Activated CD4-positive, alpha-beta memory T cell treated with anti-CD3 and anti-CD28 coated beads for 36 hours (primary cell): ENCODE measurements at regions of chr2 and their contacts with region 1.

Region 1: GRCh38 chr2:219498280-219499057 is at the start of gene GMPPA:
- DNase-seq: peak; percentile 97
- H3K4me3 Mint-ChIP-seq: peak within 1 kb of the TSS; percentile 83
- H3K27ac Mint-ChIP-seq: peak within 1 kb of the TSS; percentile 72
- H3K4me1 Mint-ChIP-seq: peaks cover 38% of the 10 kb centered on the region
- H3K27me3 Mint-ChIP-seq: peaks cover 41% of the 10 kb centered on the region
- total RNA-seq, gene GMPPA: 37.1 to 37.4 TPM

Region 2: DNA sequence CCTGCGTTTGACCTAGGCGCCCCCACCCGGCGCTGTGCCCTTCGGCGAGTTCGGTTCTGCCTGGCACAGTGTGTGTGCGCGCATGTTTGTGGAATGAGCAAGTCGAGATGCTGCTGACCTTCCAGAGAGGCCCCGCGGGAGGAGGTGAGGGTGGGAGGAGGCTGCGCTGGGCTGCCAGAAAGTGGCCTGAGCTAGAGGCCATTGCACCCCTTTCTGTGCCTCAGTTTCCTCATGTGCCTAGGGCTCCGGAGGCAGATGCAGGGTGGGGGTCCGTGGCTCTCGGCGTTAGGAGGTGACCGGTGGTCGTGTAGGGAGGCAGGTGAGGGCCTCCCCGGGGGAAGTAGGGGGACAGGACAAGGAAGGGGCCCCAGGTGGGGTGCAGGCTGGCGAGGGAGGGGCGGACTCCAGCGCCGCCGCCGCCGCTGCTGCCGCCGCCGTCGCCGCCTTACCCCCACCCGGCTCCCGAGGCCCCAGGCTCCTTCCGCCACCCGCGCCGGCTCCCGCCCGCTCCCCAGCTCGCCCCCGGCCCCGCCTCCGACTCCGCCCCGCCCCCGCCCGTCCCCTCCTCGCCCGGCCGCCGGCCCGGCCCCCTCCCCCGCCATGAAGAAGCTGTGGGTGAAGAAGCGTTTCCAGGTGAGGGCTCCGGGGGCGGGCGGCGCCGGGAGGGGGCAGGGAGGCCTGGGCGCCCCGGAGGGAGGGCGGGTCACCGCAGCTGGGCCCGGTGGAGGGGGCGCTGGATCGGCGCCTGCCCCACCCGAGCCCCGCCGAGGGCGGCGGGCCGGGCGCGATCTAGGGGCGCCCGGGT is 56.8 kb before region 1 on chr2:
- CTCF ChIA-PET with region 1: no interaction called
- POLR2A ChIA-PET with region 1: no interaction called
- intact Hi-C with region 1: loop called (anchors 5 kb)
- DNase-seq: peak; percentile 60
- H3K4me3 Mint-ChIP-seq: peak overlapping the region; percentile 63
- H3K27ac Mint-ChIP-seq: no peak overlapping the region
- H3K4me1 Mint-ChIP-seq: peaks cover 11% of the 10 kb centered on the region
- H3K27me3 Mint-ChIP-seq: peaks cover 20% of the 10 kb centered on the region

Region 3: GRCh38 chr2:219475697-219476651 is 22.5 kb before region 1 on chr2:
- CTCF ChIA-PET with region 1: interaction called, 19 read pairs
- POLR2A ChIA-PET with region 1: no interaction called
- intact Hi-C with region 1: loop called (anchors 2 kb)
- DNase-seq: peak; percentile 78
- H3K4me3 Mint-ChIP-seq: no peak overlapping the region
- H3K27ac Mint-ChIP-seq: no peak overlapping the region
- H3K4me1 Mint-ChIP-seq: peaks cover 4% of the 10 kb centered on the region
- H3K27me3 Mint-ChIP-seq: peaks cover 3% of the 10 kb centered on the region

Region 4: GRCh38 chr2:219509780-219510511 is 11.5 kb after region 1 on chr2:
- CTCF ChIA-PET with region 1: interaction called, 77 read pairs
- POLR2A ChIA-PET with region 1: no interaction called
- intact Hi-C with region 1: loop called (anchors 1 kb)
- DNase-seq: peak; percentile 65
- H3K4me3 Mint-ChIP-seq: no peak overlapping the region
- H3K27ac Mint-ChIP-seq: no peak overlapping the region
- H3K4me1 Mint-ChIP-seq: peaks cover 25% of the 10 kb centered on the region
- H3K27me3 Mint-ChIP-seq: peaks cover 46% of the 10 kb centered on the region

Region 5: GRCh38 chr2:219543601-219544358 is 45.3 kb after region 1 on chr2 and contains the starts of genes CHPF and TMEM198:
- CTCF ChIA-PET with region 1: interaction called, 43 read pairs
- POLR2A ChIA-PET with region 1: interaction called, 4 read pairs
- intact Hi-C with region 1: loop called (anchors 1 kb)
- DNase-seq: peak; percentile 98
- H3K4me3 Mint-ChIP-seq: peak within 1 kb of the TSS; percentile 92
- H3K27ac Mint-ChIP-seq: peak within 1 kb of the TSS; percentile 65
- H3K4me1 Mint-ChIP-seq: peaks cover 22% of the 10 kb centered on the region
- H3K27me3 Mint-ChIP-seq: peaks cover 5% of the 10 kb centered on the region
- total RNA-seq, gene CHPF: 19.9 to 21.0 TPM
- total RNA-seq, gene TMEM198: 2.6 to 4.4 TPM

Region 6: DNA sequence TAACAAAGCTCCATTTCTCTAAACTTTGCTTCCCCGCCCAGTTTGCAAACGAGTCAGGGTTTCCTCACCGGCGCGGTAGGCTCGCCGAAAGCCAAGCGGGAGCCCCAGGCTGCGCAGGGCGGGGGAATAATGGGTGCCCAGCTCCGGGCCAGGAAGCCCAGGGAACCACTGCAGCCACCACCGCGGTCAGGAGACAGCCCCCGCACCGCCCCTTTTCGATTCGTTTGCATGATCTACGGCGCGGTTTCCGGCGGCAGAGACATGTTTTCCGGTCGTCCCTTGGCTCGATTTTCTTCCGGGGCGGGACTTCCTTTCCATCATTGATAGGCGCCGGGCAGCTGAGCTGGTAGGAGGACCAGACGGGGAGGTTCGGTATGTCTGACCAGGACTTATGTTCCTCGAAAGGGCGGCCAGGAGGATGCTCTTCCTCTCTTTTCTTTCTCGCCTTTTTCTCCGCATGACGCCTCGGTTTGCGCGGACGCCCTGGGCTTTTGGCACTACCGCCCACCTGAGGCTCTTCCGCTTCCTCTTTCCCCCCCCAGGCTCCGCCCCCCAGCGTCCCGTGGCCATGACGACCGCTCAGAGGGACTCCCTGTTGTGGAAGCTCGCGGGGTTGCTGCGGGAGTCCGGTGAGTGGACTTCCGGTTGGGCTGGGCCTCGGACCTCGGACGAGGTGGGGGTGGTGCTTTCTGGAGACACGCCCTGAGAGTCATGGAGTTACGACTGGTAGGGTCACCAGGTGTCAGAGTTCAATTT is 99.3 kb after region 1 on chr2 and contains the start of gene STK11IP:
- CTCF ChIA-PET with region 1: no interaction called
- POLR2A ChIA-PET with region 1: interaction called, 6 read pairs
- intact Hi-C with region 1: loop called (anchors 1 kb)
- DNase-seq: peak; percentile 96
- H3K4me3 Mint-ChIP-seq: peak within 1 kb of the TSS; percentile 88
- H3K27ac Mint-ChIP-seq: peak within 1 kb of the TSS; percentile 93
- H3K4me1 Mint-ChIP-seq: peaks cover 10% of the 10 kb centered on the region
- H3K27me3 Mint-ChIP-seq: peaks cover 4% of the 10 kb centered on the region
- total RNA-seq, gene STK11IP: 28.7 to 28.9 TPM

Region 7: GRCh38 chr2:219658196-219658846 is 159.9 kb after region 1 on chr2:
- CTCF ChIA-PET with region 1: no interaction called
- POLR2A ChIA-PET with region 1: no interaction called
- intact Hi-C with region 1: no loop called
- DNase-seq: no peak
- H3K4me3 Mint-ChIP-seq: no peak overlapping the region
- H3K27ac Mint-ChIP-seq: no peak overlapping the region
- H3K4me1 Mint-ChIP-seq: no peaks in the 10 kb centered on the region
- H3K27me3 Mint-ChIP-seq: peaks cover 24% of the 10 kb centered on the region